WTC11 (cell line): ENCODE measurements at regions of chr2 and their contacts with region 1.

Region 1: GRCh38 chr2:16608661-16609643 is 56.7 kb downstream of the CYRIA start:
- DNase-seq: peak; percentile 95
- ATAC-seq: peak; percentile 91
- H3K4me3 Mint-ChIP-seq: peak overlapping the region; percentile 81
- H3K27ac Mint-ChIP-seq: peak overlapping the region; percentile 82
- H3K4me1 Mint-ChIP-seq: peaks cover 19% of the 10 kb centered on the region
- H3K27me3 Mint-ChIP-seq: no peaks in the 10 kb centered on the region
- CTCF ChIP-seq: peak; percentile 92

Region 2: GRCh38 chr2:16525265-16525887 is 83.6 kb before region 1 on chr2:
- CTCF ChIA-PET with region 1: interaction called, 44 read pairs
- POLR2A ChIA-PET with region 1: no interaction called
- DNase-seq: peak; percentile 81
- ATAC-seq: peak; percentile 82
- H3K4me3 Mint-ChIP-seq: no peak overlapping the region
- H3K27ac Mint-ChIP-seq: no peak overlapping the region
- H3K4me1 Mint-ChIP-seq: peaks cover 15% of the 10 kb centered on the region
- H3K27me3 Mint-ChIP-seq: peaks cover 3% of the 10 kb centered on the region; the same call in 1 of the 2 replicates
- CTCF ChIP-seq: peak; percentile 78

Region 3: GRCh38 chr2:16553226-16553625 is 55.7 kb before region 1 on chr2:
- CTCF ChIA-PET with region 1: interaction called, 18 read pairs
- POLR2A ChIA-PET with region 1: no interaction called
- DNase-seq: peak; percentile 30
- ATAC-seq: peak; percentile 76; the same call in 1 of the 2 replicates
- H3K4me3 Mint-ChIP-seq: no peak overlapping the region
- H3K27ac Mint-ChIP-seq: no peak overlapping the region
- H3K4me1 Mint-ChIP-seq: 0 out of 2 replicates have a peak, but pooled peaks cover 2% of the 10 kb centered on the region
- H3K27me3 Mint-ChIP-seq: no peaks in the 10 kb centered on the region
- CTCF ChIP-seq: peak; percentile 67

Region 4: GRCh38 chr2:16625201-16625729 is 16.3 kb after region 1 on chr2:
- CTCF ChIA-PET with region 1: interaction called, 10 read pairs
- POLR2A ChIA-PET with region 1: no interaction called
- DNase-seq: no peak
- ATAC-seq: peak; percentile 71
- H3K4me3 Mint-ChIP-seq: no peak overlapping the region
- H3K27ac Mint-ChIP-seq: no peak overlapping the region
- H3K4me1 Mint-ChIP-seq: peaks cover 41% of the 10 kb centered on the region
- H3K27me3 Mint-ChIP-seq: no peaks in the 10 kb centered on the region
- CTCF ChIP-seq: no peak

Region 5: GRCh38 chr2:16722677-16723076 is 113.7 kb after region 1 on chr2:
- CTCF ChIA-PET with region 1: interaction called, 13 read pairs
- POLR2A ChIA-PET with region 1: no interaction called
- DNase-seq: peak; percentile 67
- ATAC-seq: peak; percentile 98
- H3K4me3 Mint-ChIP-seq: no peak overlapping the region
- H3K27ac Mint-ChIP-seq: no peak overlapping the region
- H3K4me1 Mint-ChIP-seq: peaks cover 12% of the 10 kb centered on the region
- H3K27me3 Mint-ChIP-seq: no peaks in the 10 kb centered on the region
- CTCF ChIP-seq: no peak

Region 6: GRCh38 chr2:16756831-16757644 is 148.1 kb after region 1 on chr2:
- CTCF ChIA-PET with region 1: interaction called, 118 read pairs
- POLR2A ChIA-PET with region 1: no interaction called
- DNase-seq: peak; percentile 81
- ATAC-seq: peak; percentile 96
- H3K4me3 Mint-ChIP-seq: no peak overlapping the region
- H3K27ac Mint-ChIP-seq: peak overlapping the region; percentile 85; the same call in 1 of the 2 replicates
- H3K4me1 Mint-ChIP-seq: peaks cover 2% of the 10 kb centered on the region
- H3K27me3 Mint-ChIP-seq: no peaks in the 10 kb centered on the region; the same call in 1 of the 2 replicates
- CTCF ChIP-seq: peak; percentile 95